Gastrocnemius medialis (tissue), 4 donors: ENCODE measurements at regions of chr15 and their contacts with region 1.

Region 1: DNA sequence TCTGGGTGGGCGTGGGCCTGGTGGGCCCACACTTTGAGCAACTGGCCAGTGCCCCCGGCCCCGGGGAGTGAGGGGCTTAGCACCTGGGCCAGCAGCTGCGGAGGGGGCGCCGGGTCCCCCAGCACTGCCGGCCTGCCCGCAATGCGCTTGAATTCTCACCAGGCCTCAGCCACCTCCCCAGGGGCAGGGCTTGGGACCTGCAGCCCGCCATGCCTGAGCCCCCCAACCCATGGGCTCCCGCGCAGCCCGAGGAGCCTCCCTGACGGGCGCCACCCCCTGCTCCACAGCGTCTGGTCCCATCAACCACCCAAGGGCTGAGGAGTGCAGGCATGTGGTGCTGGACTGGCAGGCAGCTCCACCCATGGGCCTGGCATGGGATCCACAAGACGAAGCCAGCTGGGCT is 484.3 kb downstream of the UNC13C start:
- DNase-seq: no peak
- ATAC-seq: no peak
- H3K4me3 ChIP-seq: no peak overlapping the region
- H3K27ac ChIP-seq: no peak overlapping the region
- H3K4me1 ChIP-seq: no peaks in the 10 kb centered on the region
- H3K27me3 ChIP-seq: no peaks in the 10 kb centered on the region
- CTCF ChIP-seq: no peak
- POLR2A ChIP-seq: no peak

Region 2: DNA sequence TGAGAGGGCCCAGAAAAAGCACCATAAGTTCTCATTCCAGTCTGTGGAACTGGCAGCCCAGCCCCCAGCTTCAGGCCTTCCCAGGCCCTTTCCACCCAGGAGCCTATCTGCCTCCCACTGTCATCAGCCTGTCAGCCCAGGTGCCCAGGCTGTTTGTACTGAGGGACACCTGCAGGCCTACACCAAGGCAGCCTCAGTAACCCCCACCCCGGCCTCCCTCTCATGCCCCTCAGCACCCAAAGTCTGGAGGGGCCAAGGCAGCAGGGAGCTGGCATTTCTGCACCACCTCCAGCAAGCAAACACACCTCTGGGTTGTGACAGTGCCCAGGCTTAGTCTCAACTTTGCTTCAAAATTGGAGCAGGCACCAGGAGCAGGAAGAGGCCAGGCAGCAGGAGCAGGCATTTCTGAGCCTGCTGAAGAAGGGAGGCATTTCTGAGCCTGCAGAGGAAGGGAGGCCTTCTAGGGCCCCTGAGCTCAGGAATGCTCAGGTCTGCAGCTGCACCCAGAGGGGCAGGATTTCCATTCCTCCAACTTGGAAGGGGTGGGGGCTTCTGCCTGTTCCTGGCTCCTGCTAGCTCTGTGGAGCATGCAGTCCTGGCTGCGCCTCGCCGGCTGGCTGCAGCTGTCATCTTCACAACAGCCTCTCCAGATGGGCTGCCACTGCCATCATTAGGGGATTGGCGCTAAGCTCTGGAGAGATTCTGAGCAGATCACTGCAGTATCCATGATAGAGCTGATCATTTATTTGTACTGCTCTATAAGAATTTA is 88.1 kb before region 1 on chr15:
- in situ Hi-C with region 1: loop called in 1 of 4 experiments (anchors 25 kb)
- intact Hi-C with region 1: no loop called
- DNase-seq: no peak
- ATAC-seq: no peak
- H3K4me3 ChIP-seq: no peak overlapping the region
- H3K27ac ChIP-seq: no peak overlapping the region
- H3K4me1 ChIP-seq: no peaks in the 10 kb centered on the region
- H3K27me3 ChIP-seq: no peaks in the 10 kb centered on the region
- CTCF ChIP-seq: no peak
- POLR2A ChIP-seq: no peak

Region 3: GRCh38 chr15:54515664-54516582 is 53.4 kb after region 1 on chr15:
- in situ Hi-C with region 1: no loop called
- intact Hi-C with region 1: no loop called
- DNase-seq: no peak
- ATAC-seq: no peak
- H3K4me3 ChIP-seq: no peak overlapping the region
- H3K27ac ChIP-seq: no peak overlapping the region
- H3K4me1 ChIP-seq: peaks cover 0 to 6% of the 10 kb centered on the region in 2 donors
- H3K27me3 ChIP-seq: no peaks in the 10 kb centered on the region
- CTCF ChIP-seq: no peak
- POLR2A ChIP-seq: no peak

Region 4: DNA sequence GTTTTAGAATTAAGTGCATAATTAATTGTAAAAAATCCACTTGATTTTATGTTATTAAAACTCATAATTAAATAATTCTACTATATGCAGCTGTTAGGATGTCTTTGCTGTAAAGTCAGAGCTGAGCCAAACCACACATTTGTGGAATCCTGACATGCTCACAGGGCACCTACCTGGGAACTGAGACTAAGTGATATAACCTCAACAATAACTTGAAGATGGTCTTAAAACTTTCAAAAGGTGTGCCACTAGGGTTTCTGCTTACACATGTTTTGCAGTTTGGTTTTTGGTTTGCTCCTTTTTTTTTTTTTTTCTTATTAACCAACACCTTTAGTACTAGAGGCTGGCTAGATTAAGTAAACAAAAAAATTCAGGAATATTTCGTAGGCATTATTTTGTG is 65.5 kb after region 1 on chr15:
- in situ Hi-C with region 1: no loop called
- intact Hi-C with region 1: no loop called
- DNase-seq: no peak
- ATAC-seq: no peak
- H3K4me3 ChIP-seq: no peak overlapping the region
- H3K27ac ChIP-seq: no peak overlapping the region
- H3K4me1 ChIP-seq: no peaks in the 10 kb centered on the region
- H3K27me3 ChIP-seq: no peaks in the 10 kb centered on the region
- CTCF ChIP-seq: no peak
- POLR2A ChIP-seq: no peak